GM12878 (cell line): ENCODE measurements at regions of chr5 and their contacts with region 1.

Region 1: DNA sequence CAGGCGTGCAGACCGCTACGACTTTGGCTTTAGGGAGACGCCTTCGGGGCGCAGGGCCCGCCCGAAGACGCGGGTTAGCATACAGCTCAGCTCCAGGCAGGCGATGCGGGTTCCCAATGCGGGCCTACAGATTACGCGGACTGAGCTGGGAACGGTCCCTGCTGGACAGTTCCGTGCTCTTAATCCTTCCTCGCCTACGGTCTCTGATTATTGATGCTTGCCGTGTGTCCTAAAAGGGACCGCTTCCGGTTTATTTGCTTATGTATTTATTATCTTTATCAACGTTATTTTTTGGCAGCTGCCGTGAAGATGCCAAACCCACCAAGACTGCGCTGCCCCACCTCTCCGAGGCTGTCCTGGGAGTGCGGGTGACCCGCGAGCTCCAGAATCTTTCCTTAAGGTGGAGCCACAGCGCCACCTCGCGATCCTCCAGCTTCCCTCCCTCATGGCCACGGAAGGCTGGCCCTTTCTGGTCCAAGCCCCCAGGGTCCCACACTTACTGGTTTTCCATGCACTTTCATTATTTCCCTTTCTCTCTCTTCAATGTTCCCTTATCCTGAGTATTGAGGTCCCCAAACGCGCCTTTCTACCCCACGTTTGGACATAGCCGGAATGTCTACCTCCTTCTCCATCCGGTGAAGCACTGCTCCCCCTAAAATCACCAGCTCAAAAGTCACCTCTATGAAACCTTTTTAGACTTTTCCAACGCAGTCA is 7.0 kb upstream of the EBF1 start:
- DNase-seq: no peak
- ATAC-seq: peak; percentile 83
- H3K4me3 ChIP-seq: peak overlapping the region; percentile 61
- H3K27ac ChIP-seq: no peak overlapping the region
- H3K4me1 ChIP-seq: peaks cover 12% of the 10 kb centered on the region
- H3K27me3 ChIP-seq: no peaks in the 10 kb centered on the region; a peak in 2 of 4 replicates
- CTCF ChIP-seq: peak; percentile 84 to 94 (median 92)
- EP300 ChIP-seq: no peak
- POLR2A ChIP-seq: no peak
- RAD21 ChIP-seq: peak; percentile 95

Region 2: DNA sequence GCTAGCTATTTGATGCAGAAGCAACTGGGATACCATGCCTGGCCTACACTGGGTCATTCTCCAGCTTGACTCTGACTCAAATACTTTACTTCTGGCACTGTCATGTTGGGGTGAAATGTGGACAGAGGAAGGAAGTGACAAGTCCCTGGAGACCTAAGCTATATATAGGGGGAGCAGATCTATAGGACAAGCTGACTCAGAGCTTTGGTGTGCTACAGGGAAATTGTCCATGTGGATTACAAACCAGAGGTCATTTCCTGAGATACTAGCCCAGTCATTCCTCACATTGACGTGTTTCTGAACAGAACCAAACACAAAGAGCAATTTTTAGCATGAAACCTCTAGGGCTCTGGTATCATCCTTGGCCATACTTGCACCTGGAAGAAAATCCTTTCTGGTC is 716.1 kb before region 1 on chr5:
- CTCF ChIA-PET with region 1: no interaction called
- POLR2A ChIA-PET with region 1: no interaction called
- RAD21 ChIA-PET with region 1: no interaction called
- SMC1A ChIA-PET with region 1: no interaction called
- in situ Hi-C with region 1: no loop called
- intact Hi-C with region 1: loop called (anchors 10 kb)
- DNase-seq: no peak
- ATAC-seq: peak; percentile 47
- H3K4me3 ChIP-seq: no peak overlapping the region
- H3K27ac ChIP-seq: no peak overlapping the region
- H3K4me1 ChIP-seq: no peaks in the 10 kb centered on the region
- H3K27me3 ChIP-seq: no peaks in the 10 kb centered on the region
- CTCF ChIP-seq: no peak
- EP300 ChIP-seq: no peak
- POLR2A ChIP-seq: no peak
- RAD21 ChIP-seq: no peak

Region 3: GRCh38 chr5:158722940-158723339 is 383.8 kb before region 1 on chr5:
- CTCF ChIA-PET with region 1: interaction called, 17 read pairs
- POLR2A ChIA-PET with region 1: no interaction called
- RAD21 ChIA-PET with region 1: interaction called, 7 read pairs
- SMC1A ChIA-PET with region 1: interaction called, 7 read pairs
- in situ Hi-C with region 1: no loop called
- intact Hi-C with region 1: no loop called
- DNase-seq: no peak
- ATAC-seq: no peak
- H3K4me3 ChIP-seq: no peak overlapping the region
- H3K27ac ChIP-seq: no peak overlapping the region
- H3K4me1 ChIP-seq: no peaks in the 10 kb centered on the region
- H3K27me3 ChIP-seq: no peaks in the 10 kb centered on the region
- CTCF ChIP-seq: no peak
- EP300 ChIP-seq: no peak
- POLR2A ChIP-seq: no peak
- RAD21 ChIP-seq: no peak

Region 4: DNA sequence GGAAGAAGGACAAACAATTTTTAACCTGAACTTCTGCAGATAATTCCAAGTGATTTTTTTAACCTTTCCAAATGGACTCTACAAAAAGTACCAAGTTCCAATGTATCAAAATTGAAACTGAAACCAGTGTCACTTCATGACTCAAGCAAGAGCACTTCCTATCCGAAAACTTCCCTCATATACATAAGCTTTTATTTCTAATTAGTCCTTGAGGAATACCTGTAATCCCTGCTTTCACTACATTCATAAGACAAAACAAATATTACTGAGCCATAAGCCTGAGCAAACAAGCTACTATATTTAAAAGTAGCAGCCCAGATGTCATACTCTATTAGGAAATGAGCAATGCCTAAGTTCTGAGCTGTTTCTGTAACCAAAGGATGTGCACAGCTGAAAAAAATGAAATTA is 231.4 kb before region 1 on chr5:
- CTCF ChIA-PET with region 1: interaction called, 22 read pairs
- POLR2A ChIA-PET with region 1: interaction called, 7 read pairs
- RAD21 ChIA-PET with region 1: interaction called, 31 read pairs
- SMC1A ChIA-PET with region 1: interaction called, 29 read pairs
- in situ Hi-C with region 1: no loop called
- intact Hi-C with region 1: loop called (anchors 2 kb)
- DNase-seq: no peak
- ATAC-seq: peak; percentile 54
- H3K4me3 ChIP-seq: no peak overlapping the region
- H3K27ac ChIP-seq: peak overlapping the region; percentile 71
- H3K4me1 ChIP-seq: peaks cover 55% of the 10 kb centered on the region
- H3K27me3 ChIP-seq: no peaks in the 10 kb centered on the region
- CTCF ChIP-seq: no peak
- EP300 ChIP-seq: peak; percentile 60 to 64; a peak in 2 of 4 replicates
- POLR2A ChIP-seq: no peak
- RAD21 ChIP-seq: no peak

Region 5: DNA sequence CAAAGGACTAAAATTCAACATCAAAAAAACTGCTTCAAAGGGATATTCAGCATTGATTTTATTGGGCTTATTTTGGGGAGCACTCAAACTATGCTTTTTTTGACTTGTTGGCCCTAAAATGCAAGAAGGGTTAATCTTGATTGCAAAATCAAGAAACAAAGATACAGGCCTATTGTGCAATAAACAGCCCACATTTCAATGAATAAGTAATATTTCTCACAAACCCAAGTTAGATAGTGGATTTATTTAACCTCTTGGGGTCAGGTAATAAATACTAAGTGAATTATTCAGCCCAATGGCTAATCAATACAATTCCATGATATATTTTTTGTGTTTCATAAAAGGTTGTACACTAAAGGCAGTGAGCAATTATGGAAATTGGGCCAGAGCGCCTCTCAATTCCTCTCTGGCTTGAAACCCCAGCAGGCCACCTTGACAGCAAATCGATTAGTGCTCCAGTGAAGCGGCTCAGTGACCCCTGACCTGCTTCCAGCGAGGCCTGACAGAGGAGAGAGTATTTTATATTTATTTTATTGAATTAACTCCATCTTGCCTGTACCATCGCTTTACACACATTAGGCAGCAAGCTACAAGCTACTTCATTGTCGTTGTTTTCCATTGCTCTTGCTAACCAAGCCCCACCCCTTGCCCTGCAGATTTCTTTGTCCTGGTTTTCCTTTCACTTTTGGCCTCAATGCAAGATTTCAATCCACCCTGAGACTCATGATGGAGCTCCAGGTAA is 72.5 kb before region 1 on chr5:
- CTCF ChIA-PET with region 1: interaction called, 4 read pairs
- POLR2A ChIA-PET with region 1: interaction called, 4 read pairs
- RAD21 ChIA-PET with region 1: interaction called, 3 read pairs
- SMC1A ChIA-PET with region 1: interaction called, 11 read pairs
- in situ Hi-C with region 1: no loop called
- intact Hi-C with region 1: no loop called
- DNase-seq: no peak
- ATAC-seq: peak; percentile 84
- H3K4me3 ChIP-seq: peak overlapping the region; percentile 33
- H3K27ac ChIP-seq: peak overlapping the region; percentile 61
- H3K4me1 ChIP-seq: peaks cover 37% of the 10 kb centered on the region
- H3K27me3 ChIP-seq: no peaks in the 10 kb centered on the region
- CTCF ChIP-seq: no peak
- EP300 ChIP-seq: no peak
- POLR2A ChIP-seq: no peak
- RAD21 ChIP-seq: no peak

Region 6: DNA sequence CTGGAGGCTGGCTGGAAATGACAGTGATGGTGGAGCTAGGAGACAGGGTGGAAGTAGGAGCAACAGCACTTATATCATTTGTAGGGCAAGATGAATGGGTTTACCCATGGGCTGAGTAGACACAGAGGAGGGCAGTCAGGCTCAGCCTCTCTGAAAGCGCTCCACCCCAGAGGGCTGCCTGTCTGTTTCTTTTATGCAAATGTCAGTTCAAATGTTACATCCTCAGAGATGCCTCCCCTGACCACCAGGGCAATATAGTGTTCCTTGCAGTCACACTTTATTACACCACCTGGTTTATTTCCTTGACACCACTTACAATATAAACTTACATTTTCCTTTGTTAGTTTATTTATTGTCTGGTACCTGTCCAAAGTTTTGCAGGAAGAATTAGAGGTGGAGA is 383.1 kb after region 1 on chr5:
- CTCF ChIA-PET with region 1: no interaction called
- POLR2A ChIA-PET with region 1: no interaction called
- RAD21 ChIA-PET with region 1: no interaction called
- SMC1A ChIA-PET with region 1: no interaction called
- in situ Hi-C with region 1: no loop called
- intact Hi-C with region 1: no loop called
- DNase-seq: no peak
- ATAC-seq: peak; percentile 60
- H3K4me3 ChIP-seq: no peak overlapping the region
- H3K27ac ChIP-seq: no peak overlapping the region
- H3K4me1 ChIP-seq: no peaks in the 10 kb centered on the region
- H3K27me3 ChIP-seq: no peaks in the 10 kb centered on the region
- CTCF ChIP-seq: peak in 1 of 3 experiments; percentile 13; a peak in 1 of 6 replicates
- EP300 ChIP-seq: no peak
- POLR2A ChIP-seq: no peak
- RAD21 ChIP-seq: no peak